Heart right ventricle (tissue), 16 donors: ENCODE measurements at regions of chr5 and their contacts with region 1.

Region 1: GRCh38 chr5:41924872-41925554 is at the start of gene FBXO4:
- DNase-seq: peak; percentile 85 to 91
- ATAC-seq: peak; percentile 98 to 100 (median 99)
- H3K4me3 ChIP-seq: peak within 1 kb of the TSS; percentile 45 to 90 (median 82)
- H3K27ac ChIP-seq: peak within 1 kb of the TSS; percentile 76 to 99 (median 95)
- H3K4me1 ChIP-seq: peaks cover 0 to 35% (median 14%) of the 10 kb centered on the region in 9 donors
- H3K27me3 ChIP-seq: no peaks in the 10 kb centered on the region
- CTCF ChIP-seq: peak; percentile 19 to 85 (median 58)
- total RNA-seq, gene FBXO4: 3.6 to 7.2 (median 5.3) TPM

Region 2: DNA sequence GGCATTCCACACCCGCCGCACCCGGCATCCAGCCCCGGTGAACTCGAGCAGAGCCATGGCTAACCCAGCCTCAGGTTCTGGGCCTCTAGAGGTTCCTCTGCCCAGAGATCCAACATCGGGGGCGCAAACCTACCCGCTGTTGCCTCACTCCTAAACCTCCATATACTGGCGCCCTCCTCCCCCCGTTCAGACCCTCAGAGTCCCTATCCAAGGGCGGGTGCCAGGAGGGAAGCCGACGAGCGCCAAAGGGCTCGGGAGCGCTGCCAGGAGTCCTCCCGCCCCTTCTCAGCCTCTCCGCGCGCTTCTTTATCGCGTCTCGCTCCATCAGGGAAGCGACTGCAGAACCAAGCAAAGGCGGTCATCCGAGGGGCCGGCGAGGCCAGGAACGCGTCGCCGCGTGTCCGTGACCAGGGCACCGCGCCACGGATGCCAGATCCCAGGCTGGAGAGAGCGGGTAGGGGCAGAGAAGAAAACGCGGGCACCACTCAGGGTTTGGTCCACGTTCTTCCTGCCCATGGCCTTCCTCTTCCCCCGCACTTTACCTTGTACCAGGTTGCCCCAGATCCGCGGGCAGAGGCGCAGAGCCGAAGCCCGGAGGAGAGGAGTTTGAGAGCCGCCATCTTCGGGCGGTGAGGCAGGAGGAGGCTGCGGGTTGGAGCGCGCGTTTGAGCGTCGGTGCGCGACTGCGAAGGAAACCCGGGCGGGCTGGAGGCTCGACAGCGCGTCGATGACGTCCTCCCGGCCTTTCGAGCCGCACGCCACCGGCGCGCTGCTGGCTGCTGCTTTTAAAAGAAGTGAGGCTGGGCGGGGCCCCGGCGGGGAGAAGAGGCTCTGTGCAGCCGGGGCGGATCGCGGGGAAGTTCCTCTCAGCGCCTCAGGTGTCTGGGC is 55.0 kb before region 1 on chr5 and contains the start of gene OXCT1:
- intact Hi-C with region 1: loop called in 1 of 10 experiments (anchors 2 kb)
- DNase-seq: peak; percentile 75 to 83
- ATAC-seq: peak; percentile 74 to 90 (median 85)
- H3K4me3 ChIP-seq: peak within 1 kb of the TSS; percentile 48 to 85 (median 77)
- H3K27ac ChIP-seq: peak within 1 kb of the TSS; percentile 79 to 95 (median 92)
- H3K4me1 ChIP-seq: peaks cover 0 to 37% (median 23%) of the 10 kb centered on the region in 9 donors
- H3K27me3 ChIP-seq: no peaks in the 10 kb centered on the region
- CTCF ChIP-seq: no peak
- total RNA-seq, gene OXCT1: 93.2 to 340 (median 261) TPM

Region 3: GRCh38 chr5:41903892-41904799 is 20.9 kb before region 1 on chr5 and contains the start of gene RIMOC1:
- intact Hi-C with region 1: loop called in 3 of 10 experiments (anchors 1 to 2 kb)
- DNase-seq: peak; percentile 98 to 99
- ATAC-seq: peak; percentile 98 to 100 (median 99)
- H3K4me3 ChIP-seq: peak within 1 kb of the TSS; percentile 34 to 93 (median 70)
- H3K27ac ChIP-seq: peak within 1 kb of the TSS; percentile 51 to 92 (median 87)
- H3K4me1 ChIP-seq: peaks cover 0 to 49% (median 37%) of the 10 kb centered on the region in 9 donors
- H3K27me3 ChIP-seq: peaks cover 0 to 4% (median 0%) of the 10 kb centered on the region in 7 donors
- CTCF ChIP-seq: no peak
- total RNA-seq, gene RIMOC1: 10.2 to 27.6 (median 17.1) TPM

Region 4: DNA sequence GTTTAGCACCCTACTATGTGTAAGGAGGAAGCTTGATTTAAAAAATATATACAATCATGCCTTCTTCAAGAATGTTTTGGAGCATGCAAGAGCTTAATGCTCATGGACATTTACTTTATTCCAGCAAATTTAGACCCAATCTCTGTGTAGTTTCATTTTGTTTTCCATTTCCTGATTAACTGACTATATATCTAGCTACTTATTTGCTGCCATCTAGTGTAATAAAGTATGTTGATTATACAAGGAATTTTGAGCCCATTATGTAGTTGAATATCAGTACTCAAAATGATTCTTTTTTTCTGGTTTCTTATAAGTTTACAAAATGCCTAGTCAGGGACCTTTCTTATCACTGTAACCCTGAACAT is 731.6 kb after region 1 on chr5:
- intact Hi-C with region 1: loop called in 1 of 10 experiments (anchors 10 kb)
- DNase-seq: no peak
- ATAC-seq: peak in 4 of 8 donors; percentile 56 to 70 (median 65)
- H3K4me3 ChIP-seq: peak overlapping the region in 5 of 10 donors; percentile 15 to 35 (median 29)
- H3K27ac ChIP-seq: no peak overlapping the region
- H3K4me1 ChIP-seq: peaks cover 0 to 29% (median 25%) of the 10 kb centered on the region in 9 donors
- H3K27me3 ChIP-seq: no peaks in the 10 kb centered on the region
- CTCF ChIP-seq: peak in 7 of 9 donors; percentile 21 to 58 (median 47)